ENCODE measurements at regions of chr16 and their contacts with region 1.

Region 1: DNA sequence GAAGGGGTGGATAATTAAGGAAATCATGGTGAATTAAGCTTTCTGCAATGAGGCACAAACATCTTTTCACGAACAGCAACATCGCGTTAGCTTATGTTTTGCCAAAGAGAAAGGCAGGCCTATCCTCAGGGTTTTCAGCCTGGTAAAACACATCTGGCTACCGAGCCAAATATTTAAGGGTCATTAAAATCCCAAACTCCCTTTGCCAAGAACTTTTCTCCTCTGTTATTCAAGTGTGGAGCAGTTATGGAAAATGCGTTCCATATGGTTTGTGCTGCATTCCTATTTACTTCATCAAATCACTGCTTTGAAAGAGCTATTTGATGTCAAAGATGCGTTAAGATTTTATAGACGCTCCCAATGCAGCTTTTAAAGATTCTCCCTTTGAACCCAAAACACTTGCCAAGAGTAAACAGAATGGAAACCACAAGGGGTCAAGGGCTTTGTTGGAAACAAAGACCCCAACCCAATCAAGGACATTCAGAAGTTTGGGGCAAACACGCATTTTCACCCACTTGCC is 308.3 kb upstream of the CDH5 start:
- DNase-seq: peak; percentile 91
- H3K4me3 ChIP-seq: no peak overlapping the region
- H3K27me3 ChIP-seq: no peaks in the 10 kb centered on the region
- CTCF ChIP-seq: no peak

Region 2: GRCh38 chr16:64971171-64971570 is 1087.1 kb before region 1 on chr16:
- CTCF ChIA-PET with region 1: no interaction called
- POLR2A ChIA-PET with region 1: interaction called, 12 read pairs
- DNase-seq: no peak
- H3K4me3 ChIP-seq: no peak overlapping the region
- H3K27me3 ChIP-seq: no peaks in the 10 kb centered on the region
- CTCF ChIP-seq: no peak

Region 3: DNA sequence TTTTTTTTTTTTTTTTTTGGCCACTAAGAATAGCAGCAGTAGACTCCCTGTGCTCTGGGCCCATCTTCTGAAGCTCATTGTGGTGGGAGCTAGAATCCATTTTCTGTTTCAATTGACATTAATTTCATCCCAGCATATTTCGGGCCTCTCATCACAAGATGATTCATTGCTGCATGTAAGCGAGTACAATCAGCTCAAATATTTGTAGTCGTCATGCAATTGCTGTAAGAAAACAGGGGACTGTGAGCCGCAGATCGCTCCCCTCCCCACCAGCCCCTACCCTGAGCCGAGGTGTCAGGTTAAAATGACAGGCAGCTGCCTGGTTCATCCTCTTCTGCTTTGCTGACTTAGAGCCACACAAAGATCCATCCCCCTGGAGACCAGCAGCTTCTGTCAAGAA is 50.5 kb before region 1 on chr16:
- CTCF ChIA-PET with region 1: no interaction called
- POLR2A ChIA-PET with region 1: interaction called, 13 read pairs
- DNase-seq: peak; percentile 23
- H3K4me3 ChIP-seq: no peak overlapping the region
- H3K27me3 ChIP-seq: no peaks in the 10 kb centered on the region; the same call in 1 of the 2 replicates
- CTCF ChIP-seq: no peak

Measured in BJ (cell line).